Activated CD8-positive, alpha-beta memory T cell treated with anti-CD3 and anti-CD28 coated beads, Interleukin-2, amount 10 ng/mL, durations not matched to agents 7 days and 5 days (primary cell): ENCODE measurements at regions of chr3 and their contacts with region 1.

Region 1: GRCh38 chr3:132535575-132536441 is 61.3 kb upstream of the ACKR4 start:
- DNase-seq: peak; percentile 66
- ATAC-seq: peak; percentile 68
- H3K4me3 Mint-ChIP-seq: no peak overlapping the region
- H3K27ac Mint-ChIP-seq: no peak overlapping the region
- H3K4me1 Mint-ChIP-seq: peaks cover 8% of the 10 kb centered on the region
- H3K27me3 Mint-ChIP-seq: no peaks in the 10 kb centered on the region

Region 2: DNA sequence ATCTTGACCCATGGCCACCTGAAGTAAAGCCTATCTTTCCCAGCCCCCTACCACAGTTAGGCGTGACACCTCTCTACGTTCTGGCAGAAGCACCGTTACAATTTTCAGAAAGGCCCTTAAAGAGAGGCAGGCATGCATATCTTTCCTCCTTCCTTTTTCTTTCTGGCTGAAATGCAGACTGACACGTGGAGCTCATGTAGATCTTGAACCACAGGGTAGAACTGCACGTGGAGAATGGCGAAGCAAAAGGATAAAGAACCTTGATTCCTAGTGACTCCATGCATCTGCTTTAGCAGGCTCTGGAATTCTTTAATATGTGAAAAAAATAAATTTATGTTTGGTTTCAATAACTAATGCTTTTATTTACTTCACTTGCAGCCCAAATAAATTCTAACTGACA is 667.6 kb before region 1 on chr3:
- CTCF ChIA-PET with region 1: no interaction called
- DNase-seq: no peak
- ATAC-seq: no peak
- H3K4me3 Mint-ChIP-seq: no peak overlapping the region
- H3K27ac Mint-ChIP-seq: no peak overlapping the region
- H3K4me1 Mint-ChIP-seq: no peaks in the 10 kb centered on the region
- H3K27me3 Mint-ChIP-seq: no peaks in the 10 kb centered on the region

Region 3: GRCh38 chr3:132522353-132522752 is 13.5 kb before region 1 on chr3:
- CTCF ChIA-PET with region 1: interaction called, 12 read pairs
- DNase-seq: peak; percentile 44
- ATAC-seq: peak; percentile 96
- H3K4me3 Mint-ChIP-seq: peak overlapping the region; percentile 51
- H3K27ac Mint-ChIP-seq: peak overlapping the region; percentile 83
- H3K4me1 Mint-ChIP-seq: peaks cover 25% of the 10 kb centered on the region
- H3K27me3 Mint-ChIP-seq: no peaks in the 10 kb centered on the region

Region 4: GRCh38 chr3:132549890-132550578 is 14.2 kb after region 1 on chr3:
- CTCF ChIA-PET with region 1: interaction called, 24 read pairs
- DNase-seq: no peak
- ATAC-seq: peak; percentile 77
- H3K4me3 Mint-ChIP-seq: no peak overlapping the region
- H3K27ac Mint-ChIP-seq: peak overlapping the region; percentile 54
- H3K4me1 Mint-ChIP-seq: peaks cover 26% of the 10 kb centered on the region
- H3K27me3 Mint-ChIP-seq: no peaks in the 10 kb centered on the region

Region 5: DNA sequence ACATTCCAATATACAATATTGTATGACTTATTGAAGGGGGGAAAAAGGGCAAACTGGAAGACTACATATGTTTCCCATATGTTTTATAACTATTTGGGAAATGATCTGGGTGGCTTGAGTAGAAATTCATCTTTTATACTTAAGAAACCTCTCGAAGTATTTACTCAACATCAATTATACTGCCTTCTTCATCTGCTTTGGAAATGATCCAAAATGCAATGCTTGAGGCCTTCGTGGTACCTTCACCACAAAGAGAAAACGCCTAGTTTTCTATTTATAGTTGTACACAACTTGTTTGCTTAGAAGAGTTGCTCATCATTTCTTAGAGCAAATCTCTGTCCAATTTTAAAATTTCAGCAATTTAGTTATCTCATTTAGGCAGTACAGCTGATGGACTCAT is 80.1 kb after region 1 on chr3:
- CTCF ChIA-PET with region 1: no interaction called
- DNase-seq: no peak
- ATAC-seq: no peak
- H3K4me3 Mint-ChIP-seq: no peak overlapping the region
- H3K27ac Mint-ChIP-seq: no peak overlapping the region
- H3K4me1 Mint-ChIP-seq: no peaks in the 10 kb centered on the region
- H3K27me3 Mint-ChIP-seq: no peaks in the 10 kb centered on the region

Region 6: DNA sequence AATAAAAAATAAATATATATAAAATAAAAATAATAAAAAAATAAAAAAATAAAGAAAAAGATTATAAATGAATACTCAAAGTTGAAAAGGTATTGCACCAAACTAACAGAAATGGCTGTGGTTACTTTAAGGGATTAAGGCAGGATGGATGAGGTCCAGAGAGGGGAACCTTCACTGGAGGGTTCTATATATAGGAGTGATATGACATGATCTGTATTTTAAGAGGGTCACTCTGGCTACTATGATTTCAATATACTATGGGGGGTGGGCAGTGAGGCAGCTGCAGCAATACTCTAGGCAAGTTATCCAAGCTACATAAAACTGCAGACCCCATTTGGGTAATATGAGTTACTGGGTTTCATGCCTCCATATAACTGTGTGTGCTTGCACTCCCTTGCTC is 99.2 kb after region 1 on chr3:
- CTCF ChIA-PET with region 1: interaction called, 81 read pairs
- DNase-seq: no peak
- ATAC-seq: no peak
- H3K4me3 Mint-ChIP-seq: no peak overlapping the region
- H3K27ac Mint-ChIP-seq: no peak overlapping the region
- H3K4me1 Mint-ChIP-seq: peaks cover 1% of the 10 kb centered on the region
- H3K27me3 Mint-ChIP-seq: no peaks in the 10 kb centered on the region

Region 7: GRCh38 chr3:132641837-132642538 is 106.2 kb after region 1 on chr3:
- CTCF ChIA-PET with region 1: interaction called, 81 read pairs
- DNase-seq: no peak
- ATAC-seq: peak; percentile 69
- H3K4me3 Mint-ChIP-seq: no peak overlapping the region
- H3K27ac Mint-ChIP-seq: no peak overlapping the region
- H3K4me1 Mint-ChIP-seq: peaks cover 12% of the 10 kb centered on the region
- H3K27me3 Mint-ChIP-seq: no peaks in the 10 kb centered on the region